ENCODE measurements at regions of chr17 and their contacts with region 1.

Region 1: GRCh38 chr17:68291844-68292695 is 775 bp downstream of the ARSG start:
- DNase-seq: peak; percentile 85 to 98 (median 96)
- ATAC-seq: peak; percentile 69 to 71
- H3K4me3 Mint-ChIP-seq: peak overlapping the region; percentile 77 to 94 (median 84)
- H3K27ac Mint-ChIP-seq: peak overlapping the region; percentile 81 to 95 (median 91)
- H3K4me1 Mint-ChIP-seq: peaks cover 38 to 72% (median 70%) of the 10 kb centered on the region in 4 donors
- H3K27me3 Mint-ChIP-seq: no peaks in the 10 kb centered on the region

Region 2: DNA sequence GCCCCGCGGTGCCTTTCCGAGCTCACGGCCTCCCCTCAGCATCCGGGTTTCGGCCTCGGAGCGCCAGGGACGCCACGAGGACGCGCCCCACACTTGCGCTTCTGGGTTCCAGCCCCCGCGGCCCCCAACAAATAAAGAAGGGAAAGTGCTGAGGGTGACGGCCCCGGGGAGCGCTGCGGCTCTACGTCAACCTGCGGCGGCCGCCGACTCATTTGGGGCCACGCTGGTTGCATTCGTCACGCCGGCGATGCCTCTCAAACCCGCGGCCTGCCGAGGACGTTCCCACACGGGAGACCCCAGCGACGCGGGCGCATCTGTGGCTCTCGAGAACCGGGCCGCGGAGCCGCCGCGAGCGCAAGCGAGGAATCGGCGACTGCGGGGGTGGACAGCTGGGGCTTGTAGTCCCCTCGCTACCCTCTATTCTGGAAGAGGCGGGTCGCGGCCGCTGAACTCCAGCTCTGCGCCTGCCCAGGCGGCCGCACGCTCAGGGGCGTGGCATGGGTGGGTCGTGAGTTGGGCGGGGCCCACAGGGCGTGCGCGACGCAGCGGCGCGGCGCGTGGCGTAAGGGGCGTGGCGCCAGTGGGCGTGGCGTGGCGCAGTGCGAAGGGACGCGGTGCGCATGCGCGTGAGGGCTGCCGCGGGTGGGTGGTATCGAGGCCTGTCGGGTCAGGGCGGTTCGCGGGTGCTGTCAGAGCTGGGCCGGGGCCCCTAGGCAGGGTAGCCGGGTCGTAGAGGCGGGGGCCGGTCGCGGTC is 44.4 kb before region 1 on chr17 and contains the start of gene AMZ2:
- POLR2A ChIA-PET with region 1: interaction called, 53 read pairs
- DNase-seq: peak; percentile 91 to 99 (median 98)
- ATAC-seq: peak; percentile 86 to 88
- H3K4me3 Mint-ChIP-seq: peak within 1 kb of the TSS; percentile 91 to 98 (median 94)
- H3K27ac Mint-ChIP-seq: peak within 1 kb of the TSS; percentile 90 to 99 (median 98)
- H3K4me1 Mint-ChIP-seq: peaks cover 10 to 47% (median 32%) of the 10 kb centered on the region in 4 donors
- H3K27me3 Mint-ChIP-seq: no peaks in the 10 kb centered on the region
- polyA plus RNA-seq, gene AMZ2: 89.0 to 125 (median 94.6) TPM

Region 3: GRCh38 chr17:68302066-68302601 is 10.1 kb after region 1 on chr17:
- POLR2A ChIA-PET with region 1: interaction called, 30 read pairs
- DNase-seq: no peak
- ATAC-seq: no peak
- H3K4me3 Mint-ChIP-seq: peak overlapping the region in 1 of 10 donors; percentile 41
- H3K27ac Mint-ChIP-seq: peak overlapping the region in 3 of 10 donors; percentile 54 to 90 (median 80)
- H3K4me1 Mint-ChIP-seq: peaks cover 5 to 57% (median 30%) of the 10 kb centered on the region in 4 donors
- H3K27me3 Mint-ChIP-seq: no peaks in the 10 kb centered on the region

Region 4: DNA sequence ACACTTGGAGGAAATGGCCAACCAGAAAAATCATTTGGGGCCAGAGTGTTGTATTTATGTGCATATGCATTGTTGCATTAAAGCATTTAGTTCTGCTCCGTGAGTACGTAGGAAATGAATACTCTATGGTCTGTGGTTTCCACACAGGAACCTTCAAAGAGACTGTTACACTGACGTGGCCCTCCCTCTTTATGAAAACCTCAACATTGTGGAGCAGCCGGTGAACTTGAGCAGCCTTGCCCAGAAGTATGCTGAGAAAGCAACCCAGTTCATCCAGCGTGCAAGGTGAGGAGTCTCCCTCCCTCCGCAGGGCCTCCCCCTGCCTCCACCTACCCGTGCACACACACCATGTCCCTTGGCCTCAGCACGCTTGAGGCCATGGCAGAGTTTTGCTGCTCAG is 64.5 kb after region 1 on chr17:
- POLR2A ChIA-PET with region 1: interaction called, 56 read pairs
- DNase-seq: peak in 9 of 10 donors; percentile 40 to 85 (median 76)
- ATAC-seq: peak; percentile 99
- H3K4me3 Mint-ChIP-seq: peak overlapping the region; percentile 17 to 82 (median 78)
- H3K27ac Mint-ChIP-seq: peak overlapping the region; percentile 57 to 93 (median 74)
- H3K4me1 Mint-ChIP-seq: peaks cover 20 to 62% (median 52%) of the 10 kb centered on the region in 4 donors
- H3K27me3 Mint-ChIP-seq: no peaks in the 10 kb centered on the region

Region 5: GRCh38 chr17:68417317-68417716 is 125.2 kb after region 1 on chr17:
- POLR2A ChIA-PET with region 1: interaction called, 26 read pairs
- DNase-seq: no peak
- ATAC-seq: no peak
- H3K4me3 Mint-ChIP-seq: no peak overlapping the region
- H3K27ac Mint-ChIP-seq: peak overlapping the region in 1 of 10 donors; percentile 21
- H3K4me1 Mint-ChIP-seq: peaks cover 15 to 44% (median 31%) of the 10 kb centered on the region in 4 donors
- H3K27me3 Mint-ChIP-seq: no peaks in the 10 kb centered on the region

Region 6: DNA sequence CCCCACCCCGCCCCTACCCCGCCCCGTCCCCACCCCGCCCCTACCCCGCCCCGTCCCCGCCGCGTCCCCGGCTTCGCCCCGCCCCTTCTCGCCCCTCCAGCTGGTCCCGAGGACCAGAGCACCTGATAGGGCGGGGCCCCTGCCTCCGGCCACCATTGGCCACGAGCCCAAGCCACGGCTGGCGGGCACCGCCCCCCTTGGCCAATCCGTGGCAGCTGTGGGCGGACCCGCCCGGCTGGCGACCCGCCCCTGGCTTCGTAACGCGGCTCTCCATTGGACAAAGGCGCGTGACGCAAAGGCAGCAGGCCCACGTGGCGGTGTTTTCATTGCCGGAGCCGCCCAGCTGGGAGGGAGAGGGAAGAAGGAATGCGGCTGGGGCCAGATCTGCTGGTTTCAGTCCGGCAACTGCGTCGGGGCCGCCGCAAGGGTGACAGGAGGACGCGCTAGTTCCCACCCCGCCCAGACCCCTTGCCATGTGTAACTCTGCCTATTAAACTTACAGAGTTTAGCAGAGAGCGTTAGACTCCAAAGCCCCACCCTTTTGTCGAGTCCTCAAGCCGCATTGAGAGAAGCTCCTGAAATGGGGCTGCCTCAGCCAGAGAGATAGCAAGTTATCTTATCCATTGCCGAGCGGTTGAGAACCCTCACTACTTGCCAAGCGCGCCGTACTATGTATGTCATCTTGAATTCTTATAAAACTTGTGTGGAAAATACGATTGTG is 165.6 kb after region 1 on chr17:
- POLR2A ChIA-PET with region 1: interaction called, 55 read pairs
- DNase-seq: peak; percentile 96 to 99 (median 98)
- ATAC-seq: peak; percentile 93
- H3K4me3 Mint-ChIP-seq: peak overlapping the region; percentile 71 to 89 (median 82)
- H3K27ac Mint-ChIP-seq: peak overlapping the region in 9 of 10 donors; percentile 55 to 96 (median 94)
- H3K4me1 Mint-ChIP-seq: peaks cover 15 to 69% (median 49%) of the 10 kb centered on the region in 4 donors
- H3K27me3 Mint-ChIP-seq: peaks cover 0 to 2% (median 0%) of the 10 kb centered on the region in 5 donors